Endothelial cell of umbilical vein (primary cell): ENCODE measurements at regions of chr14 and their contacts with region 1.

Region 1: DNA sequence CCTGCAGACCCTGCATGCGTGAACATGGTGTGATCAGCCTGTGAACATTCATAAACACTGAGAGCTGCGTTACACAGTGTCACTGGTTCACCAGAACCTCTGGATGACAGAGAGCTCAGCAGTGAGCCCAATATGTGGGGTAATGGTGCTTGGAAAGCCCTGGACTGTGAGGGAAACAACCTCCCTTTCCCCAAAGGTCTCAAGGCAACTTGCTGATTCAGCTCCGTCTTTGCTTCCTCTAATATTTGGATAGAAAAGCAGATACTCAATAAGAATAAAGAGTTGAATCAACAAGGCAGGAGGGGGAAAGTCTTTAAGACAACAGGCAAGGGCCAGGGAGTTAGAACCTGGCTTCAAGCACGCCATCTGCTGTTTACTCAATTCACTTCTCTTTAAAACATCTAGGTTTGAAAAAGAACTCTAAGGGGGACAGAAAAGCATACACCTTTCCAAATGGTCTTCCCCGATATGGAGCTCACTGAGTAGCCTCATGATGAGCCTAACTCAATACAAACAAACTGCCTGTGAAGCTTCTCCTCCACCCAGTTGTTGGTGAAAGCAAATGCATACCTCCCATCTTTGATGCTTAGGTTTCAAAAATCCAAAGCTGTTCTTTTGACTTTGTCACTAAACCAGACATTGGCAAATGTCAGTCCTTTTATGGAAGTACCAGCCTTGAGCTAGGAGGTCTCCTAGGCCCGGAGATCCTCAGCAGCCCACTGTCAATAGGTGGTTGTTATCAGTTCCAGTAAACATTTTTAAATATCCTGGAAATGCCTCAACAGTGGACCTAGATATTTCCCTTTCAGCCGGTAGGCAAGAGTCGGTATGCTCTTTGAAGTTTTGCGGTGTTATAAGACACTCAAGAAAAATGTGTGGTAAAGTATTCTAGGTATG is 76.1 kb downstream of the SAMD4A start:
- DNase-seq: no peak
- H3K4me3 ChIP-seq: no peak overlapping the region
- H3K27ac ChIP-seq: no peak overlapping the region
- H3K4me1 ChIP-seq: peaks cover 4% of the 10 kb centered on the region
- H3K27me3 ChIP-seq: no peaks in the 10 kb centered on the region
- CTCF ChIP-seq: peak in 1 of 2 donors; percentile 26
- POLR2A ChIP-seq: no peak

Region 2: DNA sequence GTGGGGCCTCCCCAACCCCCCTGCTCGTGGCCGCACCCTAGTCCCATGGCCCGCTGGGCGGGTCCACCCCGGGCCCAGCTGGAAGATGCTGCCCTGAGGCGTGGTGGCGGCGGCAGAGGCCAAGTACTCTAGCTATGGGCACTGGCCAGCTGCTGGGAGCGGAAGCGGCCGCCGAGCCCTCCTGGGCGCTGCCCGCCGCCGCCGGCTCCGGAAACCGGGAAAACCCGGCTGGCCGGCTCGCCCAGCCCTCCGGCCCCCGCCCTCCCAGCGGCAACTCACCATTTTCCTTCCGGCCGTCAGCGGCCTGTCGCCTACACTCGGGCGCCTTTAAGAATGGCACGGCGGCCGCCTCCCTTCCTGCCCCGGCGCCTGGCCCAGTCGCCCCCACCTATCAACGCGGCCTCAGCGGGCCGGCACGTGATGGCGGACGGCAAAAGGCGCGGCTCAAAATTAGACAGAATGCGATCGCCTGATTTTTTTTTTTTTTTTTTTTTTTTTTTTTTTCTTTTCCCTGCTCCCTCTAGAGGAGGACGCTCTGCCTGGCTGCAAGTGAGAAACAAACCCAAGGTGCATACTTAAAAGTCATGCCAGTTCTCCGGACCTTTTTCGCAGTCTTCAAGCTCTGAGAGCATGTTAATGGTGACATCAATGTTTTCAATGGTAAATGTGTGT is 154.3 kb before region 1 on chr14 and contains the start of gene GMFB:
- CTCF ChIA-PET with region 1: no interaction called
- POLR2A ChIA-PET with region 1: no interaction called
- dilution Hi-C with region 1: no loop called
- intact Hi-C with region 1: no loop called
- DNase-seq: peak; percentile 95
- H3K4me3 ChIP-seq: peak within 1 kb of the TSS; percentile 72 to 91 (median 81)
- H3K27ac ChIP-seq: peak within 1 kb of the TSS; percentile 97
- H3K4me1 ChIP-seq: peaks cover 13% of the 10 kb centered on the region
- H3K27me3 ChIP-seq: no peaks in the 10 kb centered on the region
- CTCF ChIP-seq: peak; percentile 28 to 58
- POLR2A ChIP-seq: peak; percentile 95
- total RNA-seq, gene GMFB: 35.5 and 52.0 TPM in 2 replicates

Region 3: GRCh38 chr14:54574528-54574927 is 68.5 kb before region 1 on chr14:
- CTCF ChIA-PET with region 1: interaction called, 35 read pairs
- POLR2A ChIA-PET with region 1: no interaction called
- dilution Hi-C with region 1: no loop called
- intact Hi-C with region 1: loop called (anchors 2 kb)
- DNase-seq: no peak
- H3K4me3 ChIP-seq: no peak overlapping the region
- H3K27ac ChIP-seq: no peak overlapping the region
- H3K4me1 ChIP-seq: peaks cover 37% of the 10 kb centered on the region
- H3K27me3 ChIP-seq: no peaks in the 10 kb centered on the region
- CTCF ChIP-seq: no peak
- POLR2A ChIP-seq: no peak

Region 4: GRCh38 chr14:54627540-54628363 is 15.3 kb before region 1 on chr14:
- CTCF ChIA-PET with region 1: interaction called, 10 read pairs
- POLR2A ChIA-PET with region 1: no interaction called
- dilution Hi-C with region 1: no loop called
- intact Hi-C with region 1: no loop called
- DNase-seq: peak; percentile 88
- H3K4me3 ChIP-seq: peak overlapping the region; percentile 11 to 57 (median 19)
- H3K27ac ChIP-seq: peak overlapping the region; percentile 97
- H3K4me1 ChIP-seq: peaks cover 63% of the 10 kb centered on the region
- H3K27me3 ChIP-seq: no peaks in the 10 kb centered on the region
- CTCF ChIP-seq: no peak
- POLR2A ChIP-seq: no peak

Region 5: GRCh38 chr14:54722781-54723432 is 79.9 kb after region 1 on chr14:
- CTCF ChIA-PET with region 1: interaction called, 11 read pairs
- POLR2A ChIA-PET with region 1: no interaction called
- dilution Hi-C with region 1: no loop called
- intact Hi-C with region 1: no loop called
- DNase-seq: peak; percentile 47
- H3K4me3 ChIP-seq: no peak overlapping the region
- H3K27ac ChIP-seq: no peak overlapping the region
- H3K4me1 ChIP-seq: peaks cover 6% of the 10 kb centered on the region
- H3K27me3 ChIP-seq: no peaks in the 10 kb centered on the region
- CTCF ChIP-seq: peak; percentile 24 to 30
- POLR2A ChIP-seq: no peak

Region 6: DNA sequence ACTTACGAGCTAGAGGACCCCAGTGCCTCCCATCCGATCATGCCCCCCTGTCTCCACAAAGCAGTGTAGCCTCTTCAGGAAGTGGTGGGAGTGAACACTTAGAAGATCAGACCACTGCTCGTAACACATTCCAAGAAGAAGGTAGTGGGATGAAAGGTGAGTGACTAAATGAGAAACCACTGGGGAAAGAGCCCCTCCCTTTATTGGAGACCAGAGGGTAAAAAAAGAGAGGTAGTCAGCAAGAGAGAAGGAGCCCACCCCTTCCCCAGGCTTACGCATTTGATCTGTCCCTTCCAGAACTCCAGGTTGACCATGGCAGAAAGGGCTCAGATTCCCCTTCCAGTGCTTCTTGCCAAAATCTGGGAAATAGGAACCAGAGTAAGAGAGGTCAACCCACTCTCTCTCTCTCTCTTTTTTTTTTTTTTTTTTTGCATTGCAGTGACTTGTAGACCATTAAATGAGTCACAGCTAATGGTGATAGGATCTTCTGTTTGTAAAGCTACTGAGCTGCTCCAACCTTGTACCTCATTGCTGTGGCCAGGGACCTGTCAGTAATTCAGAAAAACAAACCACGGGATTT is 94.2 kb after region 1 on chr14:
- CTCF ChIA-PET with region 1: no interaction called
- POLR2A ChIA-PET with region 1: no interaction called
- dilution Hi-C with region 1: no loop called
- intact Hi-C with region 1: no loop called
- DNase-seq: no peak
- H3K4me3 ChIP-seq: no peak overlapping the region
- H3K27ac ChIP-seq: no peak overlapping the region
- H3K4me1 ChIP-seq: no peaks in the 10 kb centered on the region
- H3K27me3 ChIP-seq: no peaks in the 10 kb centered on the region
- CTCF ChIP-seq: no peak
- POLR2A ChIP-seq: no peak

Region 7: DNA sequence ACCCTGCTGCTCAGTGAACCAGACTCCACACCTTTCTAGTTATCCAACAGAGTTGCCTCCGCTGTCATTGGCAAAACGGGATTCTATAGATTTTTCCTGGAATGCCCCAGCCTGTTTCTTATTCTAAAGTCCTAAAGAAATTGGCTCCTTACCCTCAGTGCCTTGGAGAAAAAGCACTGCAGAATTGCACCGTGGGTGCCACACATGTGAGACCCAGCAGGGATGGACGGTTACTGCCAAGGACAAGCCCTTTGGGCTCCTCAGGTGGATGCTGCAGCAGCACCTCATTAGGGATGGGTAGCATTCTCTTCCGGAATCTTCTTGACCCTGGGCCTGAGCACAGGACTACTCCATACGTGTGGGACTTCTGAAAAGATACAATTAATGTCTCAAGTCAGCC is 138.0 kb after region 1 on chr14:
- CTCF ChIA-PET with region 1: no interaction called
- POLR2A ChIA-PET with region 1: no interaction called
- dilution Hi-C with region 1: no loop called
- intact Hi-C with region 1: no loop called
- DNase-seq: no peak
- H3K4me3 ChIP-seq: no peak overlapping the region
- H3K27ac ChIP-seq: no peak overlapping the region
- H3K4me1 ChIP-seq: peaks cover 4% of the 10 kb centered on the region
- H3K27me3 ChIP-seq: no peaks in the 10 kb centered on the region
- CTCF ChIP-seq: no peak
- POLR2A ChIP-seq: no peak